ENCODE measurements at regions of chr1 and their contacts with region 1.

Region 1: GRCh38 chr1:95084317-95085176 is 11.8 kb upstream of the ALG14 start:
- DNase-seq: no peak
- H3K4me3 ChIP-seq: no peak overlapping the region
- H3K27ac ChIP-seq: peak overlapping the region; percentile 3 to 32
- H3K4me1 ChIP-seq: peaks cover 3 to 17% of the 10 kb centered on the region in 2 donors
- H3K27me3 ChIP-seq: no peaks in the 10 kb centered on the region
- CTCF ChIP-seq: peak in 2 of 3 experiments; percentile 43 to 56

Region 2: DNA sequence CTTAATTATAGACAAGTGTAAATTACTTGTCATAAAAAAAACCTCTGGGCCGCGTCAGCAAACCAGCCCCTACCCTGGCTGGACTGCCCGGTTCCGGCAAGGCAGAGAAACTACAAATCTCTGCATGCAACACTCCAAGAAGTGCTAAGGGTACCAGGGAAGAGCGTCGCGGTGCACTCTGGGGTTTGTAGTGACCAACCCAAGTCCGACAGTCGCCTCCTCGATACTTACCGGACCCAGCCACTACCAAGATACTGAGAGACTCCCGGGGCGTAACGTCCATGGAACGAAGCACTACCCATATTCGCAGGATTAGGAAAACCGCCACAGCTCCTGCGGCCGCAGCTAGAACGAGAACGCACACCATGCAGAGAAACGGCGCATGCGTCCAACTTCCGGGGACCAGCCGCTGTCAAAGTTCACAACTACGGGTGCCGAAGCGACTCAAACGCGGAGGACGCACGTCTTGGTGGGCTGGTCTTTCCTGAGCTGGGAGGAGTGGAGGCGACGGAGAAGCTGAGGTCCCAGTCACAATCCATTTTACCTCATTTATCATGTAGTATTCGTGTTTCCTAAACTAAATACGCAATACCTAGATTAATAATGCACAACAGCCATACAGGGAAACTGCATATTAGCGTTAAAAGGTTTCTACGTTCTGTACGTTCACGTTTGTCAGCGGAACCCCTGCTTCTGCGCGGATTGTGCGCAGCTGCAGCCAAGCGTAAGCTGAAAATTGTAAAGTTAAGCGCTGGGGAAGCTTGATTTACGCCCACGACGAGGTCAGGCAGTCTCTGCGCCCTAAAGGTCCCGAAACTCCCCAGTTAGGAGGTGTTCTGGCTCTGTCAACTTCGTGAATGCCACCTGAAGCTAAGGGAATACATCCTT is 11.8 kb before region 1 on chr1 and contains the start of gene ALG14:
- intact Hi-C with region 1: loop called (anchors 1 kb)
- DNase-seq: peak; percentile 72 to 96
- H3K4me3 ChIP-seq: peak within 1 kb of the TSS; percentile 67 to 71
- H3K27ac ChIP-seq: peak within 1 kb of the TSS; percentile 88 to 89
- H3K4me1 ChIP-seq: peaks cover 0 to 3% of the 10 kb centered on the region in 2 donors
- H3K27me3 ChIP-seq: no peaks in the 10 kb centered on the region
- CTCF ChIP-seq: no peak
- total RNA-seq, gene ALG14: not detected